ENCODE measurements at regions of chr14 and their contacts with region 1.

Region 1: DNA sequence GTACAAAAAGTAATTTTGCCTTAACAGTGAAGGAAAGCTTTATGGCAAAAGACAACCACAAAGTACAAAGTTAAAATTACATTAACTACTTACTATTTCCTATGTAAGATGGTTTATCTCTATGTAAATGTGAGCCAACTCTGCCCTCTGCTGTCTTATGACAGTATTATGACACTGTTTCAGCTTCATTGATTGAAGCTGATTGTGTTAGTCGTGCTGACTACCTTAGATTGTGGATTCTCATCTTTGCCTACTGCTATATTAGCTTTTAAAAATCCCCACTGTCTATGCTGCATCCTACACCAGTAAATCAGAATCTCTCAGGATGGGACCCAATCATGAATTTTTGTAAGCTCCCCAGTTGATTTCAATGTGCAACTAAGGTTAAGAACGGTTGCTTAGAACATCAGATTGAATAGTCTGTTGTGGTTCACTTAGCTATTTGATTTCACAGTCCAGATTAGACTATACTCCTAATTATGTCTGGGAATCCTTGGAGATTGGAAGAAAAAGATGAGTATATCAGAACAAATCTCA is 12.2 kb upstream of the SPTB start:
- DNase-seq: no peak
- ATAC-seq: peak; percentile 78 to 79

Region 2: GRCh38 chr14:64800000-64800399 is 91.9 kb before region 1 on chr14:
- intact Hi-C with region 1: loop called in 1 of 2 experiments (anchors 5 kb)
- DNase-seq: no peak
- ATAC-seq: peak; percentile 53 to 66

Measured in left cardiac atrium (tissue), 4 donors.